Activated T-helper 1 cell treated with anti-CD3 and anti-CD28 coated beads, Interleukin-12 subunit alpha, Interleukin-12 subunit beta, Interleukin-2, Interleukin-4 antibody, amounts not matched to agents 30 ng/mL and 10 ng/mL and 1 ng/mL, durations not matched to agents 14 hours and 24 hours and 36 hours (primary cell): ENCODE measurements at regions of chr3 and their contacts with region 1.

Region 1: GRCh38 chr3:196837819-196838420 is 29.8 kb upstream of the SENP5 start:
- DNase-seq: peak; percentile 58
- H3K4me3 Mint-ChIP-seq: no peak overlapping the region
- H3K27ac Mint-ChIP-seq: no peak overlapping the region
- H3K4me1 Mint-ChIP-seq: peaks cover 6% of the 10 kb centered on the region
- H3K27me3 Mint-ChIP-seq: no peaks in the 10 kb centered on the region

Region 2: DNA sequence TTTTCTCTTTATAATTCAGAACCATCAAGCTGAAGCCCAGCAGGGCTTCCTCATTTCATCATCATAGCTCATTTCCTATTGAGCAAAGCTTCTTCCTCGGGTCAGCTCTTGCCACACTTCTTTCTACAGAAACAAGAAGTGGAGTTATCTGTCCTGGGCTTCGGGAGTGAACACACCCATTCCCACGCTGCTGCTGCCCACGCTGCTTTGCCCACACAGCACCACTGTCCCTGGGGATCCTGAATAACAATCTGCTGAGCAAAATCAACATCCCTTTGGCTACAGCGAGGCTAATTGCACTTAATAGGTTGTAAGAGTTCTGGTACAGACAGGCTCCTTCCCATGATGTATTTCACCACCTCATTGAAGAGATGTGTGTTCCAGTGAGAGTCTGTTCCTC is 149.6 kb before region 1 on chr3:
- intact Hi-C with region 1: no loop called
- DNase-seq: no peak
- H3K4me3 Mint-ChIP-seq: no peak overlapping the region
- H3K27ac Mint-ChIP-seq: no peak overlapping the region
- H3K4me1 Mint-ChIP-seq: peaks cover 29% of the 10 kb centered on the region
- H3K27me3 Mint-ChIP-seq: no peaks in the 10 kb centered on the region

Region 3: DNA sequence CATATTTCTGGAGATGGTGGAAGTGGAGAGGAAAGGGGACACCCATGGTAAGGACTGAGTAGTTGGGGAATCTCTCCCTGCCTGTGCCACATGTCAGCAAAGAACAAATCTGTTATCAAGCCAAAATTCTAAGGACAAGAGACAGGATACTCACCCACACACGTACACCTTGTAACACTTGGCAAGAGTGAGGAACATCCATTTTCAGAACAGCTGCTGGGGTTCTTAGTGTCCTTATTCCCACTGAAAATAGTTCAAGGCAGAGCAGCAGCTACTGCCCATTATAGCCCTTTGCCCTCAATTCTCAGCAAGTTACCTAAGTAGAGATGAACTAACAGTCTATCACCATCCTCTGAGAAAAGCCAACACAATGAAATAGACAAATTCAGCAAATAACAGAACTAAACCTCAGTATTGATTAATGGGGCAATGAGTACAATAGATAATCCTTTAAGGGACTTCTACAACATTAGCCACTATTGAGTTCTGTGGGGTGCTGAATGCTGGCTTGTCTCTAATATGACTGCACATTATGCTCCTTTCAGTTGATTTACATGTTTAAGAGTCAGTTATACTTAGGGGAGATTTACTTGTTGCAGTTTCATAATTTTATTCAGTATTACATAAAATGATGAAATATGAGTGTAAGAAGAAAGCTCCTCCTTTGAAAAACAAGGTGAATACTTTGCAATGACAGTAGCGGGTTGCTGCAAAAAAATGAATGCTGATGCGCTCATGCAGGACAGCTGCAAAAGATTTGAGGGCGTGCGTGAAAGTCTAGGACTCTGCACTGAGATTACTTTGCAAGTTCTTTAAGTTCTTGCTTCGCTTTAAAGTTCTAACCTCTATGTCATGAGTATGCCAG is 52.2 kb after region 1 on chr3:
- intact Hi-C with region 1: loop called (anchors 10 kb)
- DNase-seq: no peak
- H3K4me3 Mint-ChIP-seq: no peak overlapping the region
- H3K27ac Mint-ChIP-seq: no peak overlapping the region
- H3K4me1 Mint-ChIP-seq: peaks cover 24% of the 10 kb centered on the region
- H3K27me3 Mint-ChIP-seq: no peaks in the 10 kb centered on the region

Region 4: GRCh38 chr3:196942226-196942914 is 104.5 kb after region 1 on chr3 and contains the start of gene NCBP2:
- intact Hi-C with region 1: loop called (anchors 1 kb)
- DNase-seq: peak; percentile 100
- H3K4me3 Mint-ChIP-seq: peak within 1 kb of the TSS; percentile 100
- H3K27ac Mint-ChIP-seq: peak within 1 kb of the TSS; percentile 97
- H3K4me1 Mint-ChIP-seq: peaks cover 55% of the 10 kb centered on the region
- H3K27me3 Mint-ChIP-seq: peaks cover 2% of the 10 kb centered on the region
- total RNA-seq, gene NCBP2: 102 and 111 TPM in 2 replicates

Region 5: GRCh38 chr3:197029511-197030167 is 191.7 kb after region 1 on chr3 and contains the start of gene MELTF:
- intact Hi-C with region 1: loop called (anchors 1 kb)
- DNase-seq: peak; percentile 71
- H3K4me3 Mint-ChIP-seq: peak within 1 kb of the TSS; percentile 74
- H3K27ac Mint-ChIP-seq: no peak within 1 kb of the TSS
- H3K4me1 Mint-ChIP-seq: no peaks in the 10 kb centered on the region
- H3K27me3 Mint-ChIP-seq: peaks cover 1% of the 10 kb centered on the region
- total RNA-seq, gene MELTF: 3.9 and 6.4 TPM in 2 replicates

Region 6: GRCh38 chr3:197186887-197187588 is 349.1 kb after region 1 on chr3:
- intact Hi-C with region 1: loop called (anchors 5 kb)
- DNase-seq: peak; percentile 5
- H3K4me3 Mint-ChIP-seq: no peak overlapping the region
- H3K27ac Mint-ChIP-seq: no peak overlapping the region
- H3K4me1 Mint-ChIP-seq: peaks cover 13% of the 10 kb centered on the region
- H3K27me3 Mint-ChIP-seq: no peaks in the 10 kb centered on the region